Posterior vena cava (tissue), 2 donors: ENCODE measurements at regions of chr14 and their contacts with region 1.

Region 1: DNA sequence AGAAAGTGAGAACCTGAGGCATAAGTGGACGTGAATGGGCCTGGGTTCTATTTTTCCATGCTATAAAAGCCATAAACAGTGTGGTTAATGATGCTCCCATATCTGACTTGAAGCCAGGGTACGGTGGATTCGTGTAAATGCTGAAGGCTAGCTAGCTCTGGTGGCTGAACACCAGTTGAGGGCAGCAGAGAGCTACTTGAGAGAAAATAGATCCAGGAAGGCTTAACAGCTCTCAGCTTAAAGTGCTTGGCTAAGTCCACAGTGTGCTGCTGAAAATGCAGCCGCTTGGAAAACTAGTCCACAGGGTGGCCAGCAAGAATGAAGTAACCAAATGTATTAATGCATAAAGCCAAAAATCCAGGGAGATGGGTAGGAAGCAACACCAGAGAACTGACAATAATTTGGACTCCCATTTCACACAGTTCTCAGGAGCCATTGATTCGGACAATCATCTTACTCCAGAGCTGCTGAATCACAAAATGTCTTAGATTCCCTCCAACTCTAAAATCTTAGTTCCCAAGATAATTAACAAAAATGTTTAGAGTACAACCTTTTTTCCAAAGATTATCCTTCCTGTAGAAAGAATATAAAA is 15.0 kb upstream of the FOXG1 start:
- DNase-seq: no peak

Region 2: GRCh38 chr14:28681683-28682082 is 69.9 kb before region 1 on chr14:
- intact Hi-C with region 1: loop called in 1 of 2 experiments (anchors 2 kb)
- DNase-seq: no peak

Region 3: GRCh38 chr14:29536886-29537511 is 785.4 kb after region 1 on chr14:
- intact Hi-C with region 1: loop called (anchors 10 kb)
- DNase-seq: no peak

Region 4: DNA sequence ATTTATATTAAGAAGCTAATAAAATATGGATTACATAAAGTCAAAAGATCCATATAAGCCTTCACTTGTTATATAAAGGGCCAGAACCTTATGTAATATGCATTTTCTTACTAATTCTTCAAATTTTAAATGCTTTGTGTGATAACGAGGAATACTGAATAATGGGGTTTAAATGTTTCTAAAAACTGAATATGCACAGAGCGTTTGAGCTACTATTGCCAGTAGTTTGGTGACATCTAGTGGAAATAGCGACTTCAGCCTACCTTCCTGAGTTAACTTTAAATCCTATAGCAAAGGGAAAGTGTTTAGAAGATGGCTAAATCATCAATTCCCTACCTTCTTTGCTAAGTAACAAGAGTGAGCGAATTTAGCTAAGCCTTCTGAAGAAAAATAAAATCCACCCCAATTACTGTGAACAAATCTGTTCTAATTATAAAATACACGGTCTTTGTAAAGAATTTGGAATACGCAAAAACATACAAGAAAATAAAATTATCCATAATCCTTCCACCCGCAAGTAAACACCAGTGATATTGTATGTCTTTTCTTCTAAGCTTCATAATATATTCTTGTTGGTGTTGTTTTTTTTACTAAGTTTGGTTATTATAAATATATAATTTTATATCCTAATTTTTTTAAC is 1691.9 kb after region 1 on chr14:
- intact Hi-C with region 1: loop called in 1 of 2 experiments (anchors 10 kb)
- DNase-seq: no peak